ENCODE measurements at regions of chr21 and their contacts with region 1.

Region 1: DNA sequence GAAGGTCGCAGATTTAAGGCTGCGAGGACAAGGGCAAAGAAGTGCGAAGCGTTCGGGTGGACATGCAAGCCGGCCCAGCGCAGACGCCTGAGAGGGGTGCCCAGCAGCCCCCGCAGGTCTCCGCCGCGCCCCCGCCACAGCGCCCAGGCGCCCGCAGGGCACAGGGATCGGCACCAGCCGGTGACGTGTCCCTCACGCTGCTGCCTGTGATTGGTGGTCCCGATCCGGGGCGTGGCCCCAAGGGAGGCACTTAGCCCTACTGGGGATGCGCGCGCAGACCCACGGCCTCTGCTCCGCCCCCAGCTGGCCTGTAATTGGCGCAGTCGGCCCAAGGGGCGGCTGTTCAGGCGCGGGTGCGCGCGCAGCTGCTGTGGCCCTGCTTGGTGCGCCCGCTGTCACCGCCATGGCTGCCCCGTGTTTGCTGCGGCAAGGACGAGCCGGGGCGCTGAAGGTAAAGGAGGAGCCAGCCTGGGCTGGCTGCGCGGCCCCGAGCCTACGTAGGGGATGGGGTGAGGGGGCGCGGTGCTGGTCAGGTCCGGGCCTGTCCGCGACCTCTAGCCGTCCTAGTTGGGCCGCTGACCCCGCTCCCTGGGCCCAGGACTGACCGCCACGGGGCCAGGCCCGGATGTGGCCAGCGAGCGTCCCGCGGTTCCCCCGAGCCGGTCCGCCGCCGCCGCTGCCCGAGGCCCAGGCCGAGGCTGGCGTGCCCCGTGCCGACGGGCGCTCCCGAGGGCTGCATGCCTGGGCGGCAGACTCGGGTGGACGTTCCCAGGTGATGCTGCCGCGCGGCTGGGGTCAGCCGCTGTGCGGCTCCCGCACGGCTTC is at the start of gene NDUFV3:
- DNase-seq: peak; percentile 100
- H3K4me3 Mint-ChIP-seq: peak within 1 kb of the TSS; percentile 85
- H3K27ac Mint-ChIP-seq: peak within 1 kb of the TSS; percentile 81
- H3K4me1 Mint-ChIP-seq: peaks cover 15% of the 10 kb centered on the region
- H3K27me3 Mint-ChIP-seq: no peaks in the 10 kb centered on the region
- total RNA-seq, gene NDUFV3: 11.5 to 12.5 TPM

Region 2: DNA sequence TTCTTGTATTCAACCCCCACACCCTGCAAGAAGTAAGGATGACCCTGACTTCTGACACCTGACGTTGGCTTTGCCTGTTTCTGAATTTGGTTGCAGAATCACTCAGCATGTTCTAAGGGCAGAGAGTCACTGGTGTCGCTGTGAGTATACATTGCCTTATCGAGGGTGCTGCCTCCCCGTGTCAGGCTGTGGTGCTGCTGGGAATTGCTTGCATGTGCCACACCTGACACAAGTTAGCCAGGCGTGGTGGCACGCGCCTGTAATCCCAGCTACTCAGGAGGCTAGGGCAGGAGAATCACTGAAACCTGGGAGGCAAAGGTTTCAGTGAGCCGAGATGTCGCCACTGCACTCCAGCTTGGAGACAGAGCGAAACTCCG is 59.7 kb before region 1 on chr21:
- CTCF ChIA-PET with region 1: no interaction called
- intact Hi-C with region 1: no loop called
- DNase-seq: peak; percentile 83
- H3K4me3 Mint-ChIP-seq: peak overlapping the region; percentile 25
- H3K27ac Mint-ChIP-seq: peak overlapping the region; percentile 47
- H3K4me1 Mint-ChIP-seq: peaks cover 33% of the 10 kb centered on the region
- H3K27me3 Mint-ChIP-seq: no peaks in the 10 kb centered on the region

Region 3: DNA sequence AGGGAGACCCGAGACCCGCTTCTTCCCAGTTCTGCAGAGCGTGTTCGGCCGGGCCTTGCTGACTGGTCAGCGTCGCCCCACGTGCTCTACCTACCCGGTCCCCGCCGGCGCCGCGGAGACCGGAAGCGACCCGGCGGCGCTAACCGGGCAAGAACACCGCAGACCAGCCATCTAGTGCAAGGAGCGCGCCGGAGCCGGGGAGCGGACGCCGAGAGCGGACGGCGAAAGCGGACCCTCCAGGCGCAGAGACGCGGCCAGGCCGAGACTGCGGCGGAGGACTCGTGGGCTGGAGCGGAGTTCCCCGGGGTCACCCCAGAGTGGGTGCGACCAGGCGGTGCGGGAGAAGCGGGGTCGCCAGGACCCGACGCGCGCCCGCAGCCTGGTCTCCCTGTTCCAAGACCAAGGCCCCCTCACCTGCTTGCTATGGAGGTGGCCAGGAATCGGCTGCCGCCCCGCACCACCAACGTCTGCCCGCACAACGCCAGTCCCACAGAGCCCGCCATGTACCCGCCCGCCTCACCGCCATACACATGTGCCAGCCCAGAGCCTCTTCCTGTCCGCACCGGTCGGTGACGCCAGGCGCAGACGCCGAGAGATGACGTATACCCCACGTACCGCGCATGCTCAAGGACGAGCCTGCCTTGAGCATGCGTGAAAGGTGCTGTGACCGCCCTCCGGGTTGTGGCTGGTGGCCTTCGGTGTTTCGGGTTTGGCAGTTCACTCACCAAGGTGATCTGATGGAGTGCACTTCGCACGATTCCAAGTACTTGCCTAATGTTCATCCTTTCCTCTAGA is 14.0 kb before region 1 on chr21 and contains the start of gene WDR4:
- CTCF ChIA-PET with region 1: interaction called, 3 read pairs
- intact Hi-C with region 1: loop called (anchors 1 kb)
- DNase-seq: peak; percentile 99
- H3K4me3 Mint-ChIP-seq: peak within 1 kb of the TSS; percentile 97
- H3K27ac Mint-ChIP-seq: peak within 1 kb of the TSS; percentile 88
- H3K4me1 Mint-ChIP-seq: peaks cover 20% of the 10 kb centered on the region
- H3K27me3 Mint-ChIP-seq: no peaks in the 10 kb centered on the region
- total RNA-seq, gene WDR4: 38.6 to 38.7 TPM

Region 4: GRCh38 chr21:42923541-42924432 is 30.6 kb after region 1 on chr21:
- CTCF ChIA-PET with region 1: no interaction called
- intact Hi-C with region 1: loop called (anchors 1 kb)
- DNase-seq: peak; percentile 90
- H3K4me3 Mint-ChIP-seq: peak overlapping the region; percentile 59
- H3K27ac Mint-ChIP-seq: peak overlapping the region; percentile 73
- H3K4me1 Mint-ChIP-seq: peaks cover 15% of the 10 kb centered on the region
- H3K27me3 Mint-ChIP-seq: no peaks in the 10 kb centered on the region